Naive thymus-derived CD4-positive, alpha-beta T cell (primary cell): ENCODE measurements at regions of chr6 and their contacts with region 1.

Region 1: DNA sequence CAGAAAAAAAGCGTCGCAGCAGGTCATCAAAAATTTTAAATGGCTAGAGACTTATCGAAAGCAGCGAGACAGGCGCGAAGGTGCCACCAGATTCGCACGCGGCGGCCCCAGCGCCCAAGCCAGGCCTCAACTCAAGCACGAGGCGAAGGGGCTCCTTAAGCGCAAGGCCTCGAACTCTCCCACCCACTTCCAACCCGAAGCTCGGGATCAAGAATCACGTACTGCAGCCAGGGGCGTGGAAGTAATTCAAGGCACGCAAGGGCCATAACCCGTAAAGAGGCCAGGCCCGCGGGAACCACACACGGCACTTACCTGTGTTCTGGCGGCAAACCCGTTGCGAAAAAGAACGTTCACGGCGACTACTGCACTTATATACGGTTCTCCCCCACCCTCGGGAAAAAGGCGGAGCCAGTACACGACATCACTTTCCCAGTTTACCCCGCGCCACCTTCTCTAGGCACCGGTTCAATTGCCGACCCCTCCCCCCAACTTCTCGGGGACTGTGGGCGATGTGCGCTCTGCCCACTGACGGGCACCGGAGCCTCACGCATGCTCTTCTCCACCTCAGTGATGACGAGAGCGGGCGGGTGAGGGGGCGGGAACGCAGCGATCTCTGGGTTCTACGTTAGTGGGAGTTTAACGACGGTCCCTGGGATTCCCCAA is at the start of gene EEF1A1:
- DNase-seq: peak; percentile 91 to 100 (median 99)
- ATAC-seq: peak; percentile 90
- H3K4me3 ChIP-seq: peak within 1 kb of the TSS; percentile 98
- H3K4me3 Mint-ChIP-seq: peak within 1 kb of the TSS; percentile 89 to 99 (median 94)
- H3K27ac ChIP-seq: peak within 1 kb of the TSS; percentile 98
- H3K27ac Mint-ChIP-seq: peak within 1 kb of the TSS; percentile 94 to 99 (median 97)
- H3K4me1 ChIP-seq: peaks cover 42 to 47% of the 10 kb centered on the region in 2 donors
- H3K4me1 Mint-ChIP-seq: peaks cover 16 to 72% (median 58%) of the 10 kb centered on the region in 7 donors
- H3K27me3 ChIP-seq: no peaks in the 10 kb centered on the region
- H3K27me3 Mint-ChIP-seq: peaks cover 0 to 10% (median 0%) of the 10 kb centered on the region in 5 donors
- total RNA-seq, gene EEF1A1: 8,219 to 15,585 (median 15,428) TPM

Region 2: GRCh38 chr6:73451223-73452107 is 69.4 kb before region 1 on chr6:
- CTCF ChIA-PET with region 1: no interaction called
- POLR2A ChIA-PET with region 1: interaction called, 12 read pairs
- intact Hi-C with region 1: loop called (anchors 1 to 2 kb)
- DNase-seq: peak; percentile 22 to 53 (median 38)
- ATAC-seq: peak; percentile 61
- H3K4me3 ChIP-seq: peak overlapping the region; percentile 73
- H3K4me3 Mint-ChIP-seq: peak overlapping the region; percentile 87 to 96 (median 90)
- H3K27ac ChIP-seq: peak overlapping the region; percentile 79
- H3K27ac Mint-ChIP-seq: peak overlapping the region; percentile 65 to 93 (median 79)
- H3K4me1 ChIP-seq: peaks cover 4 to 5% of the 10 kb centered on the region in 2 donors
- H3K4me1 Mint-ChIP-seq: peaks cover 17 to 35% (median 27%) of the 10 kb centered on the region in 7 donors
- H3K27me3 ChIP-seq: no peaks in the 10 kb centered on the region
- H3K27me3 Mint-ChIP-seq: no peaks in the 10 kb centered on the region

Region 3: DNA sequence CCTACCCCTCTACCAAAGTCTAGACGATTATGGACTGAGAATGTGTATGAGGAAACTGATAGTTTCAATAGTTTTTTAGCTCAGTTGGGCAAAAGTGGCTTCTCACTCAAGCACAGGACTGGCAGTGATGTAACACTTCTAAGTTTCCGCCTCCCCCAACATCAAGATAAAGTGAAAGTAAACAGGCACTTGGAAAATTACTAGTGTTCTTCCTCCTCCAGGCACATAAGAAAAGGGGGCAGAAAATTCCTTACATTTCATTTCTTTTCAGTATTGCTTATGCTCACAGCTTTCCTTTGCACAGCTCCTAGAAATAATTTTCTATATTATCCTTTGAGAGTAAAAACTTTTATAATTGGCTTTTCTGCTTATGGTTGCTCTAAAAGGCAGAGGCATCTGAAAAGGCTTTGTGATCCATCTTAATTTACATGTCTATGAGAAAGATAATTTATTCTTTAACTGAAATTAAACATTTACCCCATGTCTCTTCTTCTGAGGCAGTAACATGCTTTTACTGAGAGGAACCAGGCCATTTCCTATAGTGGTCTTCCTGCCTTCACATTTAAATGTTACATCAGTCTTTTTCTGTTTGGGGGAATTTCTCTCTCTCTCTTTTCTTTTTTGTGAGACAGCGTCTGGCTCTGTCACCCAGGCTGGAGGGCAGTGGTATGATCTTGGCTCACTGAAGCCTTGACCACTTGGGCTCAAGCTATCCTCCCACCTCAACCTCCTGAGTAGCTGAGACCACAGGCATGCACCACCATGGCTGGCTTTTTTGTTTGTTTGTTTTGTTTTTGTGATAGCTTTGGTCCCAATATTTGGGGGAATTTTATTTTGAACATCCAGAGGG is 65.0 kb after region 1 on chr6:
- CTCF ChIA-PET with region 1: interaction called, 18 read pairs
- POLR2A ChIA-PET with region 1: interaction called, 183 read pairs
- intact Hi-C with region 1: loop called (anchors 1 kb)
- DNase-seq: peak in 7 of 9 donors; percentile 55 to 76 (median 67)
- ATAC-seq: peak; percentile 82
- H3K4me3 ChIP-seq: peak overlapping the region; percentile 51
- H3K4me3 Mint-ChIP-seq: peak overlapping the region; percentile 78 to 90 (median 86)
- H3K27ac ChIP-seq: peak overlapping the region; percentile 89
- H3K27ac Mint-ChIP-seq: peak overlapping the region; percentile 91 to 100 (median 99)
- H3K4me1 ChIP-seq: peaks cover 6 to 16% of the 10 kb centered on the region in 2 donors
- H3K4me1 Mint-ChIP-seq: peaks cover 22 to 27% (median 24%) of the 10 kb centered on the region in 7 donors
- H3K27me3 ChIP-seq: no peaks in the 10 kb centered on the region
- H3K27me3 Mint-ChIP-seq: no peaks in the 10 kb centered on the region

Region 4: GRCh38 chr6:73695619-73696421 is 175.0 kb after region 1 on chr6 and contains the start of gene CD109:
- CTCF ChIA-PET with region 1: no interaction called
- POLR2A ChIA-PET with region 1: no interaction called
- intact Hi-C with region 1: loop called in 1 of 2 experiments (anchors 1 kb)
- DNase-seq: peak; percentile 15 to 81 (median 48)
- ATAC-seq: peak; percentile 75
- H3K4me3 ChIP-seq: peak within 1 kb of the TSS; percentile 61
- H3K4me3 Mint-ChIP-seq: peak within 1 kb of the TSS; percentile 84 to 94 (median 90)
- H3K27ac ChIP-seq: peak within 1 kb of the TSS; percentile 49
- H3K27ac Mint-ChIP-seq: peak within 1 kb of the TSS; percentile 23 to 94 (median 87)
- H3K4me1 ChIP-seq: peaks cover 0 to 6% of the 10 kb centered on the region in 2 donors
- H3K4me1 Mint-ChIP-seq: peaks cover 5 to 43% (median 25%) of the 10 kb centered on the region in 7 donors
- H3K27me3 ChIP-seq: no peaks in the 10 kb centered on the region
- H3K27me3 Mint-ChIP-seq: peaks cover 0 to 33% (median 24%) of the 10 kb centered on the region in 5 donors
- total RNA-seq, gene CD109: 0.54 to 12.3 (median 1.2) TPM

Region 5: DNA sequence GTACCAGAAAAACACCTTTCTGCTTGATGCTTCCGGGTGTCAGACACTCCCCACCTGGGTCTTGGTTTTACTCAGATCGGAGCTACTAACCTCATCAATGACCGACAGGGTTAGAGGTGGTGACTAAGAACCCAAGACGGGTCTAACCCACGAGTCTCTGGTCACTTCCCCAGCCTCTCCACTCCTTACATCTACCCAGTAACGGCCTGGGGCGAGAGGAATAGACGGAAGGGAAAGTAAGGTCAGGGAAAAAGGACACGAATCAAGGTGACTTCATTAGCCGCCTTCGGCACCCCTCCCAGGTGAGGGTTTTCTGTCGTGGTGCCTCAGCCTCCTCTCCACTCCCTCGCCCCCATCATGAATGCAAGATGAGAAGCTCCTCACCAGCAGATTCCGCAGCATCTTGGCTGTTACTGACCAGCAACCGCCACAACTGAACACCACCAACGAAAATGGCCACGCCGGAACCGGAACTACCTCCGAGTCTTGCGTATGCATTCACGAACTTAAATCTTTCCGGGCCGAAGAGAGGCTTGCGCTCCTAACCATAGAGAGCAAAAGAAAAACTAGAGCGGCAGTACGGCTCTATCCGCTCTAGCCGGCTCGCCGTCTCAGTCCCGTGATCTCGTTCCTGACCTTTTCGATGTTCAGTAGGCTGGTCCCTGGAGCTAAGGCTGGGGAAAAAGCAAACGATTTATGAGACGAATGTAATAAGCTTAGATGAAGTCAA is 1722.7 kb after region 1 on chr6 and contains the start of gene COX7A2:
- CTCF ChIA-PET with region 1: no interaction called
- POLR2A ChIA-PET with region 1: interaction called, 13 read pairs
- intact Hi-C with region 1: loop called (anchors 1 to 2 kb)
- DNase-seq: peak; percentile 66 to 91 (median 83)
- ATAC-seq: peak; percentile 98
- H3K4me3 ChIP-seq: peak within 1 kb of the TSS; percentile 84
- H3K4me3 Mint-ChIP-seq: peak within 1 kb of the TSS; percentile 88 to 99 (median 98)
- H3K27ac ChIP-seq: peak within 1 kb of the TSS; percentile 90
- H3K27ac Mint-ChIP-seq: peak within 1 kb of the TSS; percentile 94 to 100 (median 98)
- H3K4me1 ChIP-seq: peaks cover 10 to 11% of the 10 kb centered on the region in 2 donors
- H3K4me1 Mint-ChIP-seq: peaks cover 9 to 53% (median 33%) of the 10 kb centered on the region in 7 donors
- H3K27me3 ChIP-seq: no peaks in the 10 kb centered on the region
- H3K27me3 Mint-ChIP-seq: peaks cover 0 to 17% (median 15%) of the 10 kb centered on the region in 5 donors
- total RNA-seq, gene COX7A2: 159 to 395 (median 183) TPM